ENCODE measurements at regions of chr2 and their contacts with region 1.

Region 1: DNA sequence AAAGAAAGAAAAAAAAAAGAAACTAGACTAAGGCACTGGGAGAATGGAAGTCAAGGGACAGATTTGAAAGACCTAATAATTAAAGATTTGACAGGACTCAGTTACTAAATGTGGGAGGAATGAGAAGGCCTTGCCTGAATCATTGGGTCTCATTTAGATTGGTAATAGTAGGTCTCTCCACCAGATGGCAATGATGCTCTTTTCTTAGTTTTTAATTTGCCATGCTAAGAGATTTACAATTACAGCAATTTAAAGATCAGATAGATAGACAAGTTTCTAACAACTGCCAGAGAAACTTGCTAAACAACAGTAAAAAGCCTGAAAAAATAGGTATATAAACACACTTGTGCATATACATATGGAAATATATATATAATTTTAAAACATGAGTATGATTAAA is 153.0 kb downstream of the TMEM247 start:
- DNase-seq: peak; percentile 79
- H3K4me3 ChIP-seq: no peak overlapping the region
- H3K27ac ChIP-seq: no peak overlapping the region
- H3K4me1 ChIP-seq: no peaks in the 10 kb centered on the region
- H3K27me3 ChIP-seq: no peaks in the 10 kb centered on the region
- CTCF ChIP-seq: peak; percentile 21 to 41
- POLR2A ChIP-seq: no peak

Region 2: DNA sequence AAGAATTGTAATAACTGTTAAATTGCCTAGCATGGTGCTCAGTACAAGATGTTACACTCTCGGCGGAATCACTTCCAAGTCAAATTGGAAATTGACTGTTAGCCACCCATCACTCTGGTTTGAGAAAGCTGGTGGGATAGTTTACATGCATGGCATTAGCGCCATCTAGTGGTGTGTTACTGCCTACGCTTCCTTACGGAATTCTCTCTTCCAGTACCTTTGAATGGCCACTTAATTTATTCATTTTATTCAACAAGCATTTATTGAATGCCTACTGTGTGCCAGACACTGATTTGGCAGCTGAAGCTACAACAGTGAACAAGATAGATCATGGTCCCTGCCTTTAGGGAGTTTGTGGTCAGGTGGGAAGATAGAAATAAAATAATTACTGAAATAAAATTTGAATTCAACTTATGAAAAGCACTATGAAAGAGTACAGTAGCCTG is 18.2 kb after region 1 on chr2:
- CTCF ChIA-PET with region 1: interaction called, 14 read pairs
- POLR2A ChIA-PET with region 1: no interaction called
- dilution Hi-C with region 1: no loop called
- intact Hi-C with region 1: loop called (anchors 1 kb)
- DNase-seq: peak; percentile 80
- H3K4me3 ChIP-seq: no peak overlapping the region
- H3K27ac ChIP-seq: no peak overlapping the region
- H3K4me1 ChIP-seq: peaks cover 4% of the 10 kb centered on the region
- H3K27me3 ChIP-seq: no peaks in the 10 kb centered on the region
- CTCF ChIP-seq: peak; percentile 81 to 83
- POLR2A ChIP-seq: no peak